ENCODE measurements at regions of chr16 and their contacts with region 1.

Region 1: DNA sequence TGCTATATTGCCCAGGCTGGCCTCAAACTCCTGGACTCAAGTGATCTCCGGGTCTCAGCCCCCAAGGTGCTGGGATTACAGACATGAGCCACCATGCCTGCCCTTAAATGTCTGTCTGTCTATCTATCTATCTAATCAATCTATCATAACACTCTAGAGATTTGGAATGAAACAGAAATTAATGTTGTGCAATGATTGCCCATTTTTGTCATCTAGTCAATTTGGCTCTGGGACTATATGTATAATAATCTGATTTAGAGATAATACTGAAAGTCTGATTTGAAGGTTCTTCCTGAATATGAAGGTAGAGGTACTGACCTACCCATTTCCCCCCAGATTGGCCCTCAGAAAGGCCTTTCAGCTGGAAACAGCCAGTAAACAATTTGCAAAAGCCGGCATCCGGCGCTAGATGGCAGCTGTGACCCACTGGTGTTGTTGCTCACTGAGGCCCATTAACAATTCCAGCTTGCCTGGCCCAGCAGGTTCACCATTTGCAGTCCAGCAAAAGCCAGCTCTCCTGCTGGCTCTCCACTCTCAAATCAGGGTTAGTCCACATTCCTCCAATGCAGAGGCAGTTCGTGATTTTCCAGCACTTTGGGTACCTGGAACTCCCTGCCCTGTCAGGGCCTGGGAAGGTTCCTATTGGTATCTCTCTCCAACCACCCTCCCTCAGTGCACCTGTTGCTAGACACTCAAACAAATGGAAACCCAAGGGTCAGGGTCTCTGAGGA is 22.9 kb upstream of the C16orf87 start:
- DNase-seq: peak; percentile 74
- H3K4me3 Mint-ChIP-seq: no peak overlapping the region
- H3K27ac Mint-ChIP-seq: no peak overlapping the region
- H3K4me1 Mint-ChIP-seq: no peaks in the 10 kb centered on the region
- H3K27me3 Mint-ChIP-seq: no peaks in the 10 kb centered on the region

Region 2: DNA sequence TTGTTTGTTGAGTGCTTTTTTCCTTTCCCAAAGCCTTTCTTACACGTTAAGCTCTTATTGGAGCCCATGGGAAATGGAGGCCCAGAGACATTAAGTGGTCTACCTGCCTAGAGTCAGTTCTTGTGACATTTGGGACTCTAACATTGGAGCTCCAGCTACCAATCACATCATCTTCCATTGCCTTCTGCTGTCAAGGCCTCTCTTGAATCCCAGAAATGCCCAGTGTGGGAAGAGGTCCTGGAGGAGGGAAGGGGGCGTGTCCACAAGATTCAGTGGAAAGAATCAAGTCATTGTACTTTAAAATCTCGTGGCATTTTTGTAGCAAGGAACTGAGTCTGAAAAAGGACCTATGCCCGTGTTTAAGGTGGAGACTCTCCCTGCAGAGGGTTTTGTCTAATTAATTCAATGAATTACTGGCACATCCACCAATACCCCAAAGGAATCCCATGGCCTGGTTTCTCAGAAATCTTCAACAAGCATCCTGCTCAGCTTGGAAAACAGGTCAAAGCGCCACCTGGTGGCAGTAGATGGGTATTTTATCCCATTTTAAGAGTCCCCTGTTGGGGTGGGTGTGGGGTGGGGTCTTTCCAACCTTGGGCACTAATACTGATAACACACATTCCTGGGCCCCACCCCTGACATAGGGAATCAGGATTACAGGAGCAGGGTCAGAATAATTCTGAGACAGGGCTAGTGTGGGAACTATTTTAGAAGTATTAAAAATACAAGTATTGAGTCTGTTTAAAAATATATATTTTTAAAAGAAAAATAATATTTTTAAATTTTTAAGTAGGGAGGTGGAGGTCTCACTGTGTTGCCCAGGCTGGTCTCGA is 54.9 kb after region 1 on chr16:
- CTCF ChIA-PET with region 1: interaction called, 14 read pairs
- POLR2A ChIA-PET with region 1: no interaction called
- DNase-seq: peak; percentile 74
- H3K4me3 Mint-ChIP-seq: no peak overlapping the region
- H3K27ac Mint-ChIP-seq: no peak overlapping the region
- H3K4me1 Mint-ChIP-seq: peaks cover 15% of the 10 kb centered on the region
- H3K27me3 Mint-ChIP-seq: no peaks in the 10 kb centered on the region

Region 3: DNA sequence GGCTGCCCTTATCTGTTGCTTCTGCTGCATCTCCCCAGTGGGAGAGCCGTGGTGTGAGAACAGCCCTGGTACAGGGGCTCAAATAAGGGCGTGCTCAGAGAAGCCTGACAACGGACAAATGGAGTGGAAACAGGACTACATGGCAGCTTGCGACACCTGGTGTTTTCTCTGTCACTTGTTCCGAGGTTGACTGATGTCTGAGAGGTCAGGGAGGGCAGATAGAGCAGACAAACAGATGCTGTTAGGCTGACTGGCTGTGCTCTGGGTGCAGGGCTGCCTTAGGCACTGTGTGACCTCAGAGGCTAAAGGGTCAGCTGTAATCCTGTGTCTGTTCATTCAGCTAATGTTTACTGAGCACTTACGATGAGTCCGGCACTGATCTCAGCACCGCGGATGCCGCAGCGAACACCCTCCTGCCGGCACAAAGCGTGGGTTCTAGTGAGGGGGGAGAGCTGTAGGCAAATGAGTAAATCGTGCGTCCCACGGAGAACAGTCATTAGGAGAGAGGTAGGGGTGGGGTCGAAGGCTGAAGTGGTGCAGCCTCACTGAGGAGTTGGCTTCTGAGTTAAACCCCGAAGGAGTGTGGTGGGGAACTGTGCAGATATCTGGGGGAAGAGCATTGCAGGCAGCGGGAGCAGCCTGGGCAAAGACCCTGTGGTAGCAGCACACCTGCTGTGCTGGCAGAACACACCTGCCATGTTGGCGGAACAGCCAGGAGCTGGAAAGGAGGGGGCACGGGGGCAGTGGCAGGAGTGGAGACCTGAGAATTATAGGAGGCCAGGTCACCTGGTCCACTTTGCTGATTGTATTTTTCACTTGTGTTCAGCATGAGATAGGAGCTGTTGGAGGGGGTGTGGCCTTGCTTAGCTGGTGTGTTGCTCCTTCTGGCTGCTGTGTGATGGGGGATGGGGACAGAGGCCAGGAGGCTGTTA is 65.2 kb after region 1 on chr16:
- CTCF ChIA-PET with region 1: interaction called, 13 read pairs
- POLR2A ChIA-PET with region 1: no interaction called
- DNase-seq: no peak
- H3K4me3 Mint-ChIP-seq: no peak overlapping the region
- H3K27ac Mint-ChIP-seq: peak overlapping the region; percentile 58
- H3K4me1 Mint-ChIP-seq: no peaks in the 10 kb centered on the region
- H3K27me3 Mint-ChIP-seq: no peaks in the 10 kb centered on the region